ENCODE measurements at regions of chr11 and their contacts with region 1.

Region 1: DNA sequence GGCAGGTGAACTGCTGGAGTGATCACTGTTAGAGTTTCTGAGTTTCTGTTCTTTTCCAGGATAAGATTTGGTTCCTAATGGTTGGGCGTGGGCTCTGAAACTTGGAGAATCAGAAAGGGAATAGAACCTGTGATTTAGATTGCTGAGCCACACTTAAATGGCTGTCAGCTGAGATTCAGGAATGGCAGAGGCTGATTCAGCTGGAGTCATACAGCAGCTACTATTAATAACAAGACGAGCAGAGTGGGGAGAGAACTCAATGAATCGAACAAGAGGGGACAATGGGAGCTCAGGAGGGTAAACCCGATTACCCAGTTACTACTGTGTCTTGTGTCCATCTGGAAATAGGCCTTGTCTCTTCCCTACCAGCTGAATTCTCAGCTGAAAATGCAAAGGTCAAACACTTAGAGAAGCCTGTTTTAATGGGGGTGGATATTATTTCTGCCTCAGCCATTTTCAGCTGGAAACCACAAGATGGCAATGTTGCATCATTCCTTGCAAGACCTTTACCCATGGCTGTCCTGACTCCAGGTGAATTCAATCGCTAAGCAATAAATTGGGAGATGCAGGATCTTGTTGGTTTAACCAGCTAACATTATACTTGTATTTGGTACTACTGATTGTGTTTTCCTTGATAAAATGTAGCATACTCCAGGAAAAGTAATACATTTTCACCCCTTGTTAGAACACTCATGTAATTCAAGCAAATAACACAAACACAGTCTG is 104.5 kb upstream of the RAG2 start:
- DNase-seq: peak; percentile 62
- H3K4me3 ChIP-seq: no peak overlapping the region
- H3K27ac ChIP-seq: no peak overlapping the region
- H3K4me1 ChIP-seq: no peaks in the 10 kb centered on the region
- H3K27me3 ChIP-seq: peaks cover 1 to 9% of the 10 kb centered on the region in 2 experiments
- CTCF ChIP-seq: peak; percentile 58 to 63
- POLR2A ChIP-seq: no peak

Region 2: DNA sequence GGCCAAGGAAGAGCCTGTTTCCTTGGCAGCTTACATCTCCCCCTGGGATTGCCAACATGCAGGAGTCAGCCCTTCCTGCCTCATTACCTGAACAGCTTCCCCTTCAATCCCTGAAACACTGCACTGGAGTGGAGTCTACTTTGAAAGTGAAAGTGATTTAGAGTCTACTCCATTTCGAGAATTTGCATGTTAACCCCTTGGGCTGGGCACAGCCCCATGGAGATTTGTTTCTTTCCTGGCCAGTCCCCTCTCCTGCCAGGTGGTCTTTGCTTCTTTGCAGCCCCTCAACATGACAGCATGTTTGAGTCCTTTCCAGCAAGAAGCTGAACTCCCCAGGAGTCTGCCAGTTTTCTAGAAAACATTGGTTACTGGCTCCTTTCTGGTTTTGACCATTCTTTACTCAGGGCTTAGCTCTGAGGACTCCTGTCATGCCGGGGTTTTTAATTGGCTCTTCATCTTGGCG is 252.4 kb before region 1 on chr11:
- CTCF ChIA-PET with region 1: no interaction called
- POLR2A ChIA-PET with region 1: no interaction called
- dilution Hi-C with region 1: no loop called
- intact Hi-C with region 1: no loop called
- DNase-seq: no peak
- H3K4me3 ChIP-seq: no peak overlapping the region
- H3K27ac ChIP-seq: no peak overlapping the region
- H3K4me1 ChIP-seq: no peaks in the 10 kb centered on the region
- H3K27me3 ChIP-seq: no peaks in the 10 kb centered on the region
- CTCF ChIP-seq: no peak
- POLR2A ChIP-seq: no peak

Region 3: DNA sequence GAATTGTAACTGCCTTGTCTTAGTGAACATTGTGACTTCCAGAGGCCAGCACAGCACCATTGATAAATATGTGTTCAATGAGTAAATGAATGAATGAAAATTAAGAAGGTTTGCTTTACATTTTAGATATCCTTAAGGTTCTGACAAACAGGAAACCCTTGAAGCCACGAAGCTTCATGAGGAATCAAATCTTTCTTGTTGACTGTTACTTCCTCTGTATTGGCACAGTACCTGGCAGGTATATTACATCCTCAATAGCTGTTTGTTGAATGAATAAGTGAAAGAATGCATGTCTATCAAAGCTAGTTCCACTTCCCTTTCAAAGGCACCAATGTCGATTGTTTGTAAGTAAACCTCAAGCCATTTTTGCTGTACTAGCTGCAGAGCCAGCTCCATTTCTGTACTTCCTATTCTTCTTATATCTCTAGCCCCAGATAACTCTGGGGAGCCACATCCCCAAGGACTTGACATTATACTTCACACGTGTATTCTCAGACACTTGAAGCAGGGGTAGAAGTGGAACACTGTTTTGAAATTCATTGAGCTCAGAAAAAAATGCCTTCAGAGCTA is 35.9 kb after region 1 on chr11:
- CTCF ChIA-PET with region 1: interaction called, 36 read pairs
- POLR2A ChIA-PET with region 1: no interaction called
- dilution Hi-C with region 1: no loop called
- intact Hi-C with region 1: no loop called
- DNase-seq: no peak
- H3K4me3 ChIP-seq: no peak overlapping the region
- H3K27ac ChIP-seq: no peak overlapping the region
- H3K4me1 ChIP-seq: no peaks in the 10 kb centered on the region
- H3K27me3 ChIP-seq: peaks cover 0 to 1% of the 10 kb centered on the region in 2 experiments
- CTCF ChIP-seq: no peak
- POLR2A ChIP-seq: no peak

Region 4: GRCh38 chr11:36929401-36929800 is 226.9 kb after region 1 on chr11:
- CTCF ChIA-PET with region 1: no interaction called
- POLR2A ChIA-PET with region 1: no interaction called
- dilution Hi-C with region 1: no loop called
- intact Hi-C with region 1: no loop called
- DNase-seq: no peak
- H3K4me3 ChIP-seq: no peak overlapping the region
- H3K27ac ChIP-seq: no peak overlapping the region
- H3K4me1 ChIP-seq: no peaks in the 10 kb centered on the region
- H3K27me3 ChIP-seq: no peaks in the 10 kb centered on the region
- CTCF ChIP-seq: no peak
- POLR2A ChIP-seq: no peak

Measured in endothelial cell of umbilical vein (primary cell).